GM13977 (cell line): ENCODE measurements at regions of chr6 and their contacts with region 1.

Region 1: DNA sequence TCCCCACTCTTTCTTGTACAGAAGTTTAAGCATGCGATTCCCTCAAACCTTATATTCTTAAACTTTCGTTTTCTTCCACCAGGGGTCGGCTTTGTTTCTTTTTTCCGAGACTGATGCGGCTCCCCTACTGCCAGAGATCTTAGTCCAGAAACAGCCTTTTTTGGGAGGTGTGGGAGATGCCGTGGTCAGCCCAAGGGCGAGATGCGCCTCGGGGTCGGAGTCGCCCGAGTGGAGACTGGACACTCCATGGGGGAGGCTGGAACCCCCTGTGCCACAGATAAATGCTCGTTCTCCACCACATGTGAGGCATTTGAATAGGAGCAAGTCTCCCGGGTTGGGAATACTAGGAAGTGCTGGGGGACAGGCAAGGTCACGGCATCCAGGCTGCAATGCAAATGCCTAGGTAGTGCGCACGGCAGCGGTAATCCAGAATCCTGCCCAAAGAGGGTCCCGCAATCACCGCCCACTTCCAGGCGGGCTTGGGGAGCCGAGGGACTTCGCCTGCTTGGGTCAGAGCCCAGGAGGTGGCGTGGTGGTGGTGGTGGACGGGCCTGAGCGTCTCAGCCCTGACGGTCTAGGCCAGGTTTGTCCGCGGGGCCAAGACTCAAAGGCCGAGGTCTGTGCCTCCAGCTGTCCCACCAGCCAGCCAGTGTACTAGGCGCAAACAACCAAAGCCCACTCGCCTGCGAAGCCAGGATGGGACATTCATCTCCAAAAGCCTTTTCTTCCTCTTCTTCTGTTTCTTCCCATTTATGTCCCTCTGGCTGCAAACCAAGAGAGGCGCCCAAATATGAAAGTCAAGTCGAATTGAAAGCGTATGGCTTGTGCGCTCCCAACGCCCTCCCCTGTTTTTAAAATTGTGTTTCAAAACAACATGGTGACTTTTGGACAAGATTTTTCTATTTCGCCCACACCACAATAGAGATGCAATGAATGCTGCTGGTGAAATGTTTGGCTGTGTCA is 39.3 kb upstream of the OSTM1 start:
- DNase-seq: peak; percentile 61
- CTCF ChIP-seq: peak; percentile 47

Region 2: DNA sequence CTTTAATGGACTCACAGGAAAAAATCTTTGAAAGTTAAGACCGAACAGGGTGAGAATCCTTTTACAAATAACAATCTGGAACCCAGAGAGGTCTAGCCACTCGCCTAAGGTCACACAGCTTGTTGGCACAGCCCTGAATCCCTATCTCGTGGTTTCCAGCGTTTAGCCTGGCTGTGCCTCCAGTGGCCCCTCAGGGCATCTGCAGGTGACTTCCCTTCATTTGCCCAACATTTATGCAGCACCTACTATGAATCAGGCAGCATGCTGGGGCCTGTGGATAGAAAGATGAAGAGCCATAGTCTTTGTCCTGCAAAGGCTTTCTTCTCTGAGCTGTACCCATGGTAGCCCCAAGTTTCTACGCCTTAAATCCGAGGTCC is 49.4 kb after region 1 on chr6:
- in situ Hi-C with region 1: loop called (anchors 5 kb)
- DNase-seq: no peak
- CTCF ChIP-seq: peak; percentile 10

Region 3: DNA sequence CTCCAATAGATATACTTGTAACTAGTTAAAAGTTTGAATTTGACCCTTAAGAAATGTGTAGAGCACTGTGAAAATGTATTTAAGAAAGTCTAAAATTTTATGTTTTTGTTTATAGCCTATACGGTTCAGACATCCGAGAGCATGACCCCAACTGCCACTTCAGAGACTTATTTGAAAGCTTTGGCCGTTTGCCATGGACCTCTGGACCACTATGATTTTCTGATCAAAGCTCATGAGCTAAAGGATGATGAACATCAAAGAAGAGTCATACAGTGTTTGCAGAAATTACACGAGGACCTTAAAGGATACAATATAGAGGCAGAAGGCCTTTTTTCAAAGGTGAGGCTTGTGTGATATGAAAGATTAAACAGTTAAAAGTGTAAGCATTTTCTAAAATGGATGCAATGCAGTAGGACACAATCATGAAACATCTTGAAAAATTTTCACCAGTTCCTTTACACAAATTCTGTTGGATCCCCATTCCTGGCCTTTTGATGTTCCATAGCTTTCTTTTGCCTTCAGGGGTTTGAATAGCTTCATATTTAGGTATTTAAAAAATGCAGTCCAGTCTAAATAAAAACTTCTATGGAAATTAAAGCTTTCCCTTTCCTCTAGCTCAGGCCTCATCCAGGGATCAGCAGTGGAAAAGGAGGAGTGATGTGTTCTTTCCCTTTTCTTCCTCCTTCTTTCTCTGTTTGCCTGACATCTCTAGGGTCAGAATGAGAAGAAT is 210.0 kb after region 1 on chr6:
- in situ Hi-C with region 1: no loop called
- DNase-seq: no peak
- CTCF ChIP-seq: no peak

Region 4: GRCh38 chr6:108348655-108349349 is 235.0 kb after region 1 on chr6:
- in situ Hi-C with region 1: no loop called
- DNase-seq: peak; percentile 74
- CTCF ChIP-seq: no peak

Region 5: GRCh38 chr6:108492131-108492766 is 378.4 kb after region 1 on chr6:
- in situ Hi-C with region 1: loop called (anchors 25 kb)
- DNase-seq: peak; percentile 34
- CTCF ChIP-seq: peak; percentile 58

Region 6: GRCh38 chr6:109036574-109037294 is 922.9 kb after region 1 on chr6:
- in situ Hi-C with region 1: no loop called
- DNase-seq: no peak
- CTCF ChIP-seq: no peak